ENCODE measurements at regions of chr17 and their contacts with region 1.

Region 1: DNA sequence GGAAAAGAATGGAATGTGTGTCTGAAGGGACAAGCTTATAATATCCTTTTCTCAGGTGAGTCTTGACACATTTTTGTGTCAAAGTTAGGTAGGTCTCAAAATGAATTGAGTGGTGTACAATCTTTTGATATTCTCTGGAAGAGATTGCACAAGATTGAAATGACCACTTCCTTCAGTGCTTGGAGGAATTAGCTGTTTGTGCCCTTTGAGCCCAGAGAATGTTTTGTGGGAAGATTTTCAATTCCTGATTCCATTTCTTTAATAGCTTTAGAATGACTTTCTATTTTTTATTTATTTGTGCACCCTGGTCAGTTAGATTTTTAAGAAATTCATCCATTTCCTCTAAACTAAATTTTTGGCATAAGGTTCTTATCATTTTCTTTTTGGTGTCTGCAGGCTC is 1.6 kb upstream of the CCL13 start:
- DNase-seq: peak; percentile 70
- ATAC-seq: peak; percentile 53
- H3K4me3 ChIP-seq: no peak overlapping the region
- H3K27ac ChIP-seq: peak overlapping the region; percentile 90; the same call in 1 of the 2 replicates
- H3K4me1 ChIP-seq: peaks cover 6% of the 10 kb centered on the region
- H3K27me3 ChIP-seq: no peaks in the 10 kb centered on the region
- CTCF ChIP-seq: no peak
- POLR2A ChIP-seq: no peak
- RAD21 ChIP-seq: no peak

Region 2: DNA sequence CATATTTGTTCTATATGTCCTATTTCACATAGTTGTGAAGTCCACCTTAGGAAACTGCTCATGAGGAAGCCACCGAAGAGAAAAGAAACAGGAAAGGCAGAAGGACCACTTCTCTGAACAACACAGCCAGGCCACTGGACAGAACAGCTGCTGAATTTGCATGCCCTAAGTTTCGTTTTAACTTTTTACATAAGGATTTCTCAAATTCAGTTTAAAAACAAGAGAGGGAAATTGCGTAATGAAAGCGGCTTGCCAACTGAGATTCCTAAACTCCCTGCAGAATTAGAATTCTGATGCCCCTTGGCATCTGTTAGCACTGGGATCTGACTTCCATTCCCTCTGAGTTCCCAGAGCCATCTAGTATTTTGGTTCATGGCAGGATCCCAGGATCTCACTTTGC is 40.4 kb before region 1 on chr17:
- CTCF ChIA-PET with region 1: no interaction called
- POLR2A ChIA-PET with region 1: no interaction called
- dilution Hi-C with region 1: no loop called
- in situ Hi-C with region 1: loop called (anchors 5 kb)
- intact Hi-C with region 1: loop called (anchors 5 kb)
- DNase-seq: peak; percentile 52
- ATAC-seq: peak; percentile 65
- H3K4me3 ChIP-seq: no peak overlapping the region
- H3K27ac ChIP-seq: peak overlapping the region; percentile 66; the same call in 1 of the 2 replicates
- H3K4me1 ChIP-seq: peaks cover 9% of the 10 kb centered on the region; the same call in 1 of the 2 replicates
- H3K27me3 ChIP-seq: no peaks in the 10 kb centered on the region
- CTCF ChIP-seq: no peak
- POLR2A ChIP-seq: no peak
- RAD21 ChIP-seq: no peak

Measured in IMR-90 (cell line).